ENCODE measurements at regions of chr6 and their contacts with region 1.

Region 1: DNA sequence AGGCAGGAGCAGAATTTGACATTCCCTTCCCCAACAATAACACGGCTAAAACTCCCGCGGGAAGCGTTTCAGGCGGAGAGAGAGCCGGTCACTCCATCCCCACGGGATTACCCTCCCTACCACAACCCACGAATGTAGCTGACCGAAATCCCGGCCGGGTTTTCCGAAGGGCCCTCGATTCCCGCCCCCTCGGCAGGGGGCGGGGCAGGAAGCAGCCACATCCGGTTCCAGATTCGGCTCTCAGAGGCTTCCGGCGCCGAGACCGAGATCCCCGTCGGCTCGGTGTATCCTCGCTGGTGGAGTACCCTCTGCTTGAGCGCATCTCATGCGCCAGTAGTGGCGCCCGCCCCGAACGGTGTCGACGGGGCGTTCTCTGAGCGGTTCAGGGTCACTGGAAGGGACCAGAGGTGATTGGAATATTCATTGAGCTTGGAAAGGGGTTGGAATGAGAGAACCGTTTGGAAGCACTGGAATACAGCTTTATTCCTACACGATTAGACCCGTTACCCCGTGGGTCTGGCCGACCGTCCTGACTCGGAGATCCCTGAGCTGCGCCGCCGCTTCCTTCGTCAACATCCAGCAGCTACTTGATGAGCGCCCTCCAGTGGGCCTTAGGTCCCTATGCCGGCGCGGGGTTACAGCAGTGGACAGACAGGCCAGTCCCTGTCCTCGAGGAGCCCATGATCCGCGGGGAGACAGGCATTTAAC is 649 bp upstream of the RGL2 start:
- DNase-seq: peak; percentile 92 to 97 (median 97)
- H3K4me3 ChIP-seq: peak overlapping the region; percentile 62 to 94 (median 87)
- H3K27ac ChIP-seq: peak overlapping the region; percentile 81 to 93
- H3K4me1 ChIP-seq: peaks cover 0 to 31% (median 27%) of the 10 kb centered on the region in 4 experiments
- H3K27me3 ChIP-seq: no peaks in the 10 kb centered on the region

Region 2: DNA sequence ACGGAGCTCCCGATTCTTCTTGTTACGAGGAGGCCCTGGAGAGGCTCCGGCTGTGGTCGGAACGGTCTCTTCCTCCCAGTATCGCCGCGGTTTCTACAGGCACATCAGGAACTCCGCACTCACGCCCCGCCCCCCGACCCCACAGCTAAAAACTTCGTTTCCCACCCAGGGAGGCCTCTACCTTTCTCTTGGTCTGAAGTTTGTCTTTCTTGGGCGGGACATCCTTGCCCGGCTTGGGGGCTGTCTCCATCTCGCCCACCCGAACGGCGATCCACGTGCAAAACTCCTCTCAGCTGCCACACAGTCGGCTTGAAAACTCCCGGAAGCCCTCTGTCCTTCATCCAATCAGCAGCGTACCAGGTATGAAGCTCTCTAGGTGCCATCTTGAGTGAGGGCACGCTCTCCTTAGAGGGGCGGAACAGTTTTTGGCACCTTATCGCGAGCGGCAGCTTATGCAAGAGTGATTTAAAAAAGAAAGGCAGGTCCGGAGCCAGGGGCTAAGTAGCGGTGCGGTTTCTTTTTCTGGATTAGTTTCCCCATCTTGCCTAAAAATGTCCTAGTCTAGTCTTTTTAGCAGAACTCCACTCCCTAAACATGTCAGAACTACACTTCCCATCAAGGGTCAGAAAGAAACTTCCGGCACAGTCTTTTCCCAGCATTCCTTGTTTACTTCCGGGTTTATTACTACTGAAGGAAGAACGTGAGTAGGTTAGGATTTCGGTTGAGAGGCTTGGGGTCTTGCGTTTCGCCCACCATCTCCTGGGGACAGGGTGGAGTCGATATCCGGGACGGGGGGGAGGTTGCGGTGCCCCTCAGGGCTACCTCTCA is 10.3 kb before region 1 on chr6 and contains the starts of genes PFDN6 and WDR46:
- CTCF ChIA-PET with region 1: interaction called, 96 read pairs
- POLR2A ChIA-PET with region 1: interaction called, 17 read pairs
- DNase-seq: peak; percentile 92 to 97 (median 96)
- H3K4me3 ChIP-seq: peak within 1 kb of the TSS; percentile 71 to 98 (median 84)
- H3K27ac ChIP-seq: peak within 1 kb of the TSS; percentile 64 to 93
- H3K4me1 ChIP-seq: peaks cover 0 to 31% (median 23%) of the 10 kb centered on the region in 4 experiments
- H3K27me3 ChIP-seq: no peaks in the 10 kb centered on the region

Region 3: DNA sequence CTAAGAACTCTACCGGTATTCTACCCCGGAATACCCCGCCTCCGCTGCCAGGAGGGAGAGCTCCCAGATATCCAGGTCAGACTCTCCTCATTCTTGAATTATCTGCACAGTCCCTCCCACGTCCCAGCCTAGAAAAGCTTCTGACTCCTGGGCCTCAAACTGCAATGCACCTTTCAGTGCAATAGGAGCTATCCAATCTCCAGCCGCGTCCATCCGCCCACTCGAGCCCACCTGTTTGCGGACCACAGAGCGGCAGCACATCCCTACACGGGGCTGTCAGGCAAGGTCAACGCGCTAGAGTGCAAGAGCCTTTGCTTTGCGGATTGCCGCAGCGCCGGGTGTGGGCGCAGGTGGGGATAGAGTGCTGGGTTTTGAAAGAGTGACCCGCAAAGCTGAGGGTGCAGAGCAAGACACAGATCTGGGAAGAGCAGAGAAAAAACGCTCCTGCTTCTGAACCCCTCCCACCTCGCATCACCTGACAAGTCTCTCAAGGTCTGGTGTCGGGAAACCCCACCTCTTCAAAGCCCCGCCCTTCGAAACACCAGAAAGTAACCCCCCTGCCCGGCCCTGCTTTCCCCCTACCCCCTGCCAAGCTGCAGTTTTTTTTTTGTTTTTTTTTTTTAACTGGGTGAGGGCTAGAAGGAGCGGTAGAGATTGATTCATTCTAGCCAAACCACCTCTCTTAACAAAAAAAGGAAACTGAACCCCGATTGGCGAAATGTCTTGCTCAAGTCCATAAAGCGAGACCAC is 13.2 kb after region 1 on chr6:
- CTCF ChIA-PET with region 1: interaction called, 19 read pairs
- POLR2A ChIA-PET with region 1: interaction called, 18 read pairs
- DNase-seq: peak; percentile 74 to 90 (median 88)
- H3K4me3 ChIP-seq: peak overlapping the region; percentile 92 to 99 (median 96)
- H3K27ac ChIP-seq: peak overlapping the region; percentile 93 to 95
- H3K4me1 ChIP-seq: peaks cover 3 to 44% (median 35%) of the 10 kb centered on the region in 4 experiments
- H3K27me3 ChIP-seq: no peaks in the 10 kb centered on the region

Region 4: DNA sequence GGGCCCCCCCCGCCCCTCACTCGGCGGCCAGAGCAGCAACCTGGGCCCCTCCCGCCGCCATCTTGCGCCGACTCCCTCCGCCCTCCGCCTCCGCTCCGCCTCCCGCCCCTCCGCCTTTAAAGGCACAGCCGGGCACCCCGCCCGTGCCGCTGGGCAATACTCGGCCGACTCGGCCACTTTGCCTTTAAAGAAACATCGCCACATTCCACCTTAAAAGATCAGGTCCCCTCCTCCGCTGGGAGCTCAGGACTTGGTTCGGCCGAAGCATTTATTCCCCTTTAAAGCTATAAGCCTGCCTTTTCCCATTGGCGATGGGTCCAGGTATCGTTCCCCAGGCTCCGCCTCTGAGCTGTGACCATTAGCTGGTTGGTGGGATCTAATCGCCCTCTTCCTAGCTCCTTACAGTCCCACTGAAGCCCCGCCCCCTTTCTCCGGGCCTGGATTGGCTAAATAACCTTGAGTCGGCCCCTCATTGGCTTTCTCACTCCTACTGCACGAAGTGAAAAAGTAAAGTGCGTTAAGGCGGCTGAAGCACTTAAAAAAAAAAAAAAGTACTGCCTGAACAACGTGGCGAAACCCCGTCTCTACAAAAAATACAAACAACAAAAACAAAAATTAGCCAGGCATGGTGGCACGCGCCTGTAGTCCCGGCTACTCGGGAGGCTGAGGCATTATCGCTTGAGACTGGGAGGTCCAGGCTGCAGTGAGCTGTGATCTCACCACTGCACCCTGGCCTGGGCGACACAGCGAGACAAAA is 18.5 kb after region 1 on chr6 and contains the start of gene ZBTB22:
- CTCF ChIA-PET with region 1: interaction called, 19 read pairs
- POLR2A ChIA-PET with region 1: interaction called, 18 read pairs
- DNase-seq: peak; percentile 99 to 100 (median 99)
- H3K4me3 ChIP-seq: peak within 1 kb of the TSS; percentile 72 to 91 (median 84)
- H3K27ac ChIP-seq: peak within 1 kb of the TSS; percentile 50 to 84
- H3K4me1 ChIP-seq: peaks cover 3 to 73% (median 46%) of the 10 kb centered on the region in 4 experiments
- H3K27me3 ChIP-seq: no peaks in the 10 kb centered on the region

Region 5: GRCh38 chr6:33344701-33345697 is 45.6 kb after region 1 on chr6:
- CTCF ChIA-PET with region 1: interaction called, 6 read pairs
- POLR2A ChIA-PET with region 1: interaction called, 16 read pairs
- DNase-seq: peak; percentile 88 to 93 (median 92)
- H3K4me3 ChIP-seq: peak overlapping the region in 6 of 7 experiments; percentile 25 to 69 (median 49)
- H3K27ac ChIP-seq: peak overlapping the region; percentile 73 to 77
- H3K4me1 ChIP-seq: peaks cover 13 to 23% (median 21%) of the 10 kb centered on the region in 4 experiments
- H3K27me3 ChIP-seq: no peaks in the 10 kb centered on the region

Region 6: GRCh38 chr6:33633462-33634158 is 334.2 kb after region 1 on chr6:
- CTCF ChIA-PET with region 1: no interaction called
- POLR2A ChIA-PET with region 1: no interaction called
- DNase-seq: peak; percentile 38 to 65 (median 58)
- H3K4me3 ChIP-seq: peak overlapping the region in 6 of 7 experiments; percentile 48 to 83 (median 65)
- H3K27ac ChIP-seq: no peak overlapping the region
- H3K4me1 ChIP-seq: peaks cover 0 to 20% (median 15%) of the 10 kb centered on the region in 4 experiments
- H3K27me3 ChIP-seq: peaks cover 0 to 13% (median 8%) of the 10 kb centered on the region in 5 experiments

Measured in common myeloid progenitor, CD34-positive (primary cell).